Astrocyte of the cerebellum (primary cell): ENCODE measurements at regions of chr10 and their contacts with region 1.

Region 1: DNA sequence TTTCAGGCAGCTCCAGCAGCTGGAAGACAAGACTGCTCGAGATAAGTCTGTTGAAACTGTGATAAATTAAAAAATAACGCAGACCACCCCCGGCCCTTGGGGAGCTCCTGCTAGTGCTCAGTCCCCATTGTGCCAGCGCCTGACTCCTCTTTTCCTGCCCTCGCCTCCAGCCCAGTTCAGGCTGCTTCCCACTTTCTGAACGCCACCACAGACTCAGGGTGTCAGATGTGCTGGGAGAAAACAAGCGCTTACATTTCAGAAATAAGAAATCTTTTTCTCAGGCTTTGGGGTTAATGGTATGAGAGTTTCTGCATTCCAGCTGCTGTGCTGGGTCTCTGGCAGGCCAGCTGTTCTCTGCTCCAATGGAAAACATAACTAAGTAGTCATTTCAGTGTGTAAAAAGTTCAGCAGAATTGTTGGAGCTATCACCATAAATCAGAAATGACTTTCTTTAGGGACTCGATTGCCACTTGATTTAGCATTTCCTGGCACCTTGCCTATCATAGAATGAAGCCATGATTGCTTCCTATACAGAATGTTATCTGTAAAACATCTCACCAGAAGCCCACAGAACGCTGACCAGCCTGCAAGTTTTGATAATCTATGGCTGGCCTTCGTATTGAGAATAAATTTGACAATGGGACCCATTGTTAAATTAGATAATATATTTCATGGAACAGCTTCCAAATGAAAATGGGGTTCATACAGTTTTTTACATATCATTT is 257.0 kb upstream of the ZNF32 start:
- DNase-seq: no peak
- H3K4me3 ChIP-seq: no peak overlapping the region
- CTCF ChIP-seq: no peak

Region 2: DNA sequence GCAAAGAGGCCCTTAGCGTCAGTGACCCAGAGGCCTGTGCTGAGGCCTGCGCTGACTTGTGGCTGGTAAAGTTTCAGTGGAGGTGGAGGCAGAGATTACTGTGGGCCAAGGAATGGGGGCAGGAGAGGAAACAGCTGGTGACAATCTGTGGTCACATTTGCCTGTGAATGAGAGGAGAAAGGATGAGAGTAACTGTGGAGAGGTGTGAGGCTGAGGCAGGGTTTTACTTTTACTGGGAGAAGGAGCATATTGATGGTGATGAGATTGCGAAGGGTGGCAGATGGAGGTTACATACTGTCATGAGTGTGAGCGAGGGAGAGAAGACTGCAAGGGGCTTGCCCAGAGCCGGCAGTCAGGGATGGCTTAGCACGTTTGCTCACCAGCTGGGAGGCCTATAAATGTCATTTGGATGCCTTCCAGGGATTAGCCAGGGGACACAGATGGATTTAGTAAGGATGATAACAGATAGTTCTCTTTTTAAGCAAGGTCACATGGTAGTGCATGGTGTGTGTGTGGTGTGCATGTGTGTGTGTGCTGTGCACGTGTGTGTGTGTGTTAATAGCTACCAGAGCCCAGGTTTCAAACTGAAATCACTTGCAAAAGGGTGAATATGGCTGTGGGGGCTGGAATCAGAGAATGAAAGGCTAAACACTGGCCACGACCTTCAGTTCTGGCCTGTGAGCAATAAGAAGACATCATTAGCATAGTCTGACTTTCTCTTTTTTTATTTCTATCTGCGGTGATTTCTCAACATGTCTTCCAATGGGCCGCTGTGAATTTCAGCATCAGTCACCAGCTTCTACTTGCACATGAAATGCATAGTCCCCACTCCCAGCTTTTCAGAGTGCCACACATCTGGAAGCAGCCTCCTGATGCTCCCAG is 34.5 kb after region 1 on chr10:
- in situ Hi-C with region 1: loop called (anchors 5 kb)
- DNase-seq: no peak
- H3K4me3 ChIP-seq: no peak overlapping the region
- CTCF ChIP-seq: no peak

Region 3: GRCh38 chr10:43965033-43965917 is 59.6 kb after region 1 on chr10:
- in situ Hi-C with region 1: no loop called
- DNase-seq: peak; percentile 46
- H3K4me3 ChIP-seq: no peak overlapping the region
- CTCF ChIP-seq: no peak